T-cell (primary cell): ENCODE measurements at regions of chr15 and their contacts with region 1.

Region 1: GRCh38 chr15:45050587-45050986 is 27.6 kb downstream of the SORD start:
- DNase-seq: no peak
- ATAC-seq: no peak
- H3K4me3 ChIP-seq: no peak overlapping the region
- H3K4me3 Mint-ChIP-seq: no peak overlapping the region
- H3K27ac ChIP-seq: no peak overlapping the region
- H3K27ac Mint-ChIP-seq: no peak overlapping the region
- H3K4me1 ChIP-seq: no peaks in the 10 kb centered on the region
- H3K4me1 Mint-ChIP-seq: peaks cover 0 to 3% (median 0%) of the 10 kb centered on the region in 3 donors
- H3K27me3 ChIP-seq: no peaks in the 10 kb centered on the region
- H3K27me3 Mint-ChIP-seq: no peaks in the 10 kb centered on the region

Region 2: DNA sequence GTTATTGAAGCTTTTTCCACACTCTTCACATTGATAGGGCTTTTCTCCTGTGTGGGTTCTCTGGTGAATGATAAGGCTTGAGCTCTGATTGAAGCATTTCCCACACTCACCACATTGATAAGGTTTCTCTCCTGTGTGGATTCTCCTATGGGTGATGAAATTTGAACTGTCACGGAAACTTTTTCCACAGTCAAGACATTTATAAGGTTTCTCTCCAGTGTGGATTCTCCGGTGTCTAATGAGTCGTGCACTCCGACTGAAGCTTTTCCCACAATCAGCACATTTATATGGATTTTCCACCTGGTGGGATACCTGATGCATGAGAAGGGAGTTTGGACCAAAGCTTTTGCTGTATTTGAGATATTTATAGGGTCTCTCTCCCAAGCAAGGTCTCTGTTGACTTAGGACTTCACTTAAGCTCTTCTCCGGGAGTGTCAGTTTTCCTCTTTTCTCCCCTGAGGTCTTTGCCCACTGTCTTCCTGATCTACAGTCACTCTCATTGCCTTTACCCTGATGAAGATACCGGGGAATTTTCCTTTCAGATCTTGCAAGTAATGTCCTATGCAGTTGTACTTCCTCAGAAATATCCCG is 1689.2 kb before region 1 on chr15:
- CTCF ChIA-PET with region 1: no interaction called
- POLR2A ChIA-PET with region 1: interaction called in 1 of 2 experiments, 10 read pairs
- DNase-seq: no peak
- ATAC-seq: no peak
- H3K4me3 ChIP-seq: no peak overlapping the region
- H3K4me3 Mint-ChIP-seq: no peak overlapping the region
- H3K27ac ChIP-seq: no peak overlapping the region
- H3K27ac Mint-ChIP-seq: no peak overlapping the region
- H3K4me1 ChIP-seq: no peaks in the 10 kb centered on the region
- H3K4me1 Mint-ChIP-seq: peaks cover 0 to 11% (median 2%) of the 10 kb centered on the region in 3 donors
- H3K27me3 ChIP-seq: no peaks in the 10 kb centered on the region
- H3K27me3 Mint-ChIP-seq: no peaks in the 10 kb centered on the region

Region 3: DNA sequence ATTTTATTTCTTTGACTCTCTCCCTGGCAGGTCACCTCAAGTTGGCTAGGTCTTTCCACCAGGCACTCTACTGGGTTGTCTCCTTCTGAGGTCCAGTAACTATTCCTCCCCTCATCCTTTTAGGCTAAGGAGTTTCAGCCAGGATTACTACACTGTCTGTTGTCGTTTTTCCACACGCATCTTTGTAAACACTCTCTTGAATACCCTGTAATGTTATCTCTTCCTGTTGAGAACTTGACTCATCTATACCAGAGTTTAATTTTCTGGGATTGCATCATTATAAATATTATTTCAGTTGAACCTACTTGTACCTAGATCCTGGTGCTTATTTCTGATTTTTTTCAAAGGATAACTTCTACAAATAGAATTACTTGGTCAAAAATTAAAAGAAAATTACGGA is 722.6 kb after region 1 on chr15:
- CTCF ChIA-PET with region 1: no interaction called
- POLR2A ChIA-PET with region 1: no interaction called
- DNase-seq: no peak
- ATAC-seq: no peak
- H3K4me3 ChIP-seq: no peak overlapping the region
- H3K4me3 Mint-ChIP-seq: no peak overlapping the region
- H3K27ac ChIP-seq: no peak overlapping the region
- H3K27ac Mint-ChIP-seq: no peak overlapping the region
- H3K4me1 ChIP-seq: no peaks in the 10 kb centered on the region
- H3K4me1 Mint-ChIP-seq: no peaks in the 10 kb centered on the region
- H3K27me3 ChIP-seq: no peaks in the 10 kb centered on the region
- H3K27me3 Mint-ChIP-seq: peaks cover 10 to 21% of the 10 kb centered on the region in 2 donors

Region 4: GRCh38 chr15:46207341-46207740 is 1156.8 kb after region 1 on chr15:
- CTCF ChIA-PET with region 1: no interaction called
- POLR2A ChIA-PET with region 1: no interaction called
- DNase-seq: no peak
- ATAC-seq: no peak
- H3K4me3 ChIP-seq: no peak overlapping the region
- H3K4me3 Mint-ChIP-seq: no peak overlapping the region
- H3K27ac ChIP-seq: no peak overlapping the region
- H3K27ac Mint-ChIP-seq: no peak overlapping the region
- H3K4me1 ChIP-seq: no peaks in the 10 kb centered on the region
- H3K4me1 Mint-ChIP-seq: no peaks in the 10 kb centered on the region
- H3K27me3 ChIP-seq: no peaks in the 10 kb centered on the region
- H3K27me3 Mint-ChIP-seq: no peaks in the 10 kb centered on the region